ENCODE measurements at regions of chr6 and their contacts with region 1.

Region 1: GRCh38 chr6:73062837-73063236 is 162.5 kb downstream of the KHDC1L start:
- DNase-seq: peak; percentile 46
- H3K4me3 ChIP-seq: no peak overlapping the region
- H3K27me3 ChIP-seq: no peaks in the 10 kb centered on the region
- CTCF ChIP-seq: no peak

Region 2: DNA sequence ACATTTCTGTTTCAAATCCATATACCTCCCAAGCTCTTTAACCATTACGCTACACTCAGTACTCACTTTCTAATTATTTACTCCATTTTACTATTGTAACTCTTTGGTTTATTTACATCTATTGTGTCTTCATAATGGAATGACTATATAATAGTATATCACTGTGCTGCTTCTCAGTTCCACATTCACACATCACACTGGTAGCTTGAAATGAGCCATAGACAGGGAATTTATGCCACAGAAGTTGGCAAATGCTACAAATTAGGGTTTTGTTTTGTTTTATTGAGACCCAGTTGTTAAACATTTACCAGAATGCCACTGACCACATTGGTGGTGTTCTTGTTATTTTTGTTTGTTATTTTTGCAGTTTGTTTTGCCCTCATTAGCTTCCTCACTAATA is 227.1 kb before region 1 on chr6:
- CTCF ChIA-PET with region 1: no interaction called
- POLR2A ChIA-PET with region 1: interaction called, 12 read pairs
- DNase-seq: no peak
- H3K4me3 ChIP-seq: no peak overlapping the region
- H3K27me3 ChIP-seq: no peaks in the 10 kb centered on the region
- CTCF ChIP-seq: no peak